GM12878 (cell line): ENCODE measurements at regions of chr18 and their contacts with region 1.

Region 1: DNA sequence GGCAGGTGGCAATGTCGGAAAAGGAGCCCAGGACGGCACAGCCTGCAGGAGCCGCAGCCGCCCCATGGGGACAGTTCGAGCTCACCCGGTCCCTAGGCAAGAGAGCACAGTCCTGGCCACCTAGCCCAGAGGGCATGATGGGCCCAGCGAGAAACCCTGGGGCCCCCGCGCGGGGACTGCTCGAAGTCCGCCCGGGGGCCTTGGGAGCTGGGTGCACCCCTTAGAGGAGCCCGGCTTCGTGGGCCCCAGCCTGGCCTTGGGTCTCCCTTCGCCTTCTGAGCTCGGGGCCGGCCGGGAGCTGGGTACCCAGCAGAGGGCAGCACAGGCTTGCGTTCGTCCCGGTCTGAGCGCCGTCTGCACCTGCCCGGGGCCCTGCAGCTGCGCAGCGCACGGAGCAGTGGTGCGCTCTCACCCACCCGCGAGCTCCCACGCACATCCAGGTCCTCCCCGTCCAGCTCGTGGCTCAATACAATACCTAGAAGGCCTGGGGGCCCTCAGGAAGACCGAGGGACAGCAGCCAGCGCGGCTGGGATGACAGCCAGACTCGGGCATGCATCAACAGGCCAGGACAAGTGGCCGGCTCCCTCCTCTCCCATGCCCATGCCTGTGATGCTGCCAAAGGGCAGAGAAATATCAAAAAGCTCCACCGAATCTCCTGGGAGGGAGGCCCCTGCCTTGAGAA is 96.2 kb upstream of the ZNF532 start:
- DNase-seq: no peak
- ATAC-seq: peak; percentile 98
- H3K4me3 ChIP-seq: no peak overlapping the region
- H3K27ac ChIP-seq: no peak overlapping the region
- H3K4me1 ChIP-seq: peaks cover 6% of the 10 kb centered on the region; the same call in 1 of the 2 replicates
- H3K27me3 ChIP-seq: no peaks in the 10 kb centered on the region; a peak in 2 of 4 replicates
- CTCF ChIP-seq: peak; percentile 80 to 93 (median 90)
- EP300 ChIP-seq: no peak
- POLR2A ChIP-seq: no peak
- RAD21 ChIP-seq: peak; percentile 81

Region 2: GRCh38 chr18:57768537-57769326 is 999.7 kb before region 1 on chr18:
- CTCF ChIA-PET with region 1: no interaction called
- POLR2A ChIA-PET with region 1: no interaction called
- RAD21 ChIA-PET with region 1: no interaction called
- SMC1A ChIA-PET with region 1: no interaction called
- in situ Hi-C with region 1: no loop called
- intact Hi-C with region 1: no loop called
- DNase-seq: no peak
- ATAC-seq: no peak
- H3K4me3 ChIP-seq: no peak overlapping the region
- H3K27ac ChIP-seq: no peak overlapping the region
- H3K4me1 ChIP-seq: no peaks in the 10 kb centered on the region
- H3K27me3 ChIP-seq: no peaks in the 10 kb centered on the region
- CTCF ChIP-seq: no peak
- EP300 ChIP-seq: no peak
- POLR2A ChIP-seq: no peak
- RAD21 ChIP-seq: no peak

Region 3: DNA sequence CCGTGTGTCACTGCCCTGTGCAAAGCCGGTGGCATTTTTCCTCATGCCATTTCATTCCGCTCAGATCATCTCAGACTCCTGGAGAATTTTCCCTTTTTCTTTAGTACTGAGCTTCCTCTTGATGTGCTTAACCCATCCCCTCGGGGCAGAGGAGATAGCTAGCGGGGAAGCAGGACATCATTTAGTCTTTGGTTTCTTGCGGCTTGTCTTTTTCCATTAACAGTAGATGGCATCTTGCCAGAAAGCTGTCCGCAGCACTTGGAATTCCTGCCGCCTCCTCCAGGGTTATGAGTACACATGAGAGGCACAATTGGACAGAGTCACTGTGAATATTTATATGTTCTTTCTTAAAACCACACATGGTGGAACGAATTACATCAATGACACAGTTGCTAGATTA is 366.2 kb before region 1 on chr18:
- CTCF ChIA-PET with region 1: interaction called, 32 read pairs
- POLR2A ChIA-PET with region 1: no interaction called
- RAD21 ChIA-PET with region 1: interaction called, 13 read pairs
- SMC1A ChIA-PET with region 1: interaction called, 11 read pairs
- in situ Hi-C with region 1: no loop called
- intact Hi-C with region 1: loop called (anchors 1 kb)
- DNase-seq: no peak
- ATAC-seq: no peak
- H3K4me3 ChIP-seq: no peak overlapping the region
- H3K27ac ChIP-seq: no peak overlapping the region
- H3K4me1 ChIP-seq: peaks cover 11% of the 10 kb centered on the region; the same call in 1 of the 2 replicates
- H3K27me3 ChIP-seq: no peaks in the 10 kb centered on the region
- CTCF ChIP-seq: no peak
- EP300 ChIP-seq: no peak
- POLR2A ChIP-seq: no peak
- RAD21 ChIP-seq: no peak

Region 4: DNA sequence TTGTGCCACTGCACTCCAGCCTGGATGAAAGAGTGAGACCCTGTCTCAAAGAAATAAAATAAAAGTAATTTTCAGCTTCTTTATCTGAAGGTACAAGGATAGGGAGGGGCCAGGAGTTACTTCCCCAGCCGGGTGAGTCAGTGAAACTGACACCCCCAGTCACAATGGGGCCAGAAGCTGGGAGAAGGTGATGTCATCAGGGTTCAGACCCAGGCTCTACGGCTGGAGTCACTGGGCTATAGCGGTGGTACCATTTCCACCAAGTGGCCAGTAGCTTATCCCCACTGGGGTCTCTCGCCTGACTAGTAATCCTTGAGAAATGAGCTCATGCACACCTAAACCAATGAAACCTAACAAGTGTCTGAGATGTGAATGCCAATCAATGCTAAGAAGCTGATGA is 247.5 kb before region 1 on chr18:
- CTCF ChIA-PET with region 1: interaction called, 743 read pairs
- POLR2A ChIA-PET with region 1: interaction called, 8 read pairs
- RAD21 ChIA-PET with region 1: interaction called, 522 read pairs
- SMC1A ChIA-PET with region 1: interaction called, 629 read pairs
- in situ Hi-C with region 1: no loop called
- intact Hi-C with region 1: no loop called
- DNase-seq: no peak
- ATAC-seq: peak; percentile 73
- H3K4me3 ChIP-seq: no peak overlapping the region
- H3K27ac ChIP-seq: no peak overlapping the region
- H3K4me1 ChIP-seq: peaks cover 16% of the 10 kb centered on the region
- H3K27me3 ChIP-seq: no peaks in the 10 kb centered on the region
- CTCF ChIP-seq: no peak
- EP300 ChIP-seq: no peak
- POLR2A ChIP-seq: no peak
- RAD21 ChIP-seq: no peak

Region 5: DNA sequence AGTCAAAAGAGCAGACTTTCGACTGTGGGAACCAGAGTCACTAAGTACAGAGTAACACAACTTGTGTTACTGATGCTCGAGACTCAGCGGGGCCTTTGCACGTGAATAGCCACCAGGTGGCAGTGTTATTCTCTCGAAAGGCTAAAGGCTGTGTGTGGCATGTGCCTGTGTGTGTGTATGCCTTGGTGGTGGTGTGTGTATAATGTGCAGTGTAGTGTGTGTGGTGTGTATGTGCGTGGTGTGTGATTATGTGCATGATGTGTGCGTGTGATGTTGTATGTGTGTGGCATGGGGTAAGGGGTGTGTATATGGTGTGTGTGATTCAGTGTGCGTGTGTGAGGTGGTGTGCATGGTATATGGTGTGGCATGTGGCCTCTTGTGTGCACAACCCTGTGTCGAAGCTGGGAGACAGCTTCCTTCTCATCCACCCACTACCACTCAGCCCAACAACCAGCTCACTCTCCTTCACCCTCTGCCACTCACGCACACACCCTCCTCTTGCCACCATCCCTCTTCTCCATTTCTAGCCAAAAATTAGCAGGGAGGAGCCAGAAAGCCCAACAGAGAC is 13.3 kb after region 1 on chr18:
- CTCF ChIA-PET with region 1: interaction called, 68 read pairs
- POLR2A ChIA-PET with region 1: no interaction called
- RAD21 ChIA-PET with region 1: interaction called, 18 read pairs
- SMC1A ChIA-PET with region 1: interaction called, 12 read pairs
- in situ Hi-C with region 1: no loop called
- intact Hi-C with region 1: no loop called
- DNase-seq: peak; percentile 57
- ATAC-seq: peak; percentile 99
- H3K4me3 ChIP-seq: no peak overlapping the region
- H3K27ac ChIP-seq: no peak overlapping the region
- H3K4me1 ChIP-seq: no peaks in the 10 kb centered on the region
- H3K27me3 ChIP-seq: no peaks in the 10 kb centered on the region
- CTCF ChIP-seq: peak; percentile 80 to 91 (median 83)
- EP300 ChIP-seq: no peak
- POLR2A ChIP-seq: no peak
- RAD21 ChIP-seq: peak; percentile 93

Region 6: GRCh38 chr18:58863539-58864145 is 95.2 kb after region 1 on chr18:
- CTCF ChIA-PET with region 1: no interaction called
- POLR2A ChIA-PET with region 1: no interaction called
- RAD21 ChIA-PET with region 1: no interaction called
- SMC1A ChIA-PET with region 1: no interaction called
- in situ Hi-C with region 1: no loop called
- intact Hi-C with region 1: no loop called
- DNase-seq: no peak
- ATAC-seq: peak; percentile 66
- H3K4me3 ChIP-seq: peak overlapping the region; percentile 68; the same call in 1 of the 2 replicates
- H3K27ac ChIP-seq: no peak overlapping the region
- H3K4me1 ChIP-seq: no peaks in the 10 kb centered on the region
- H3K27me3 ChIP-seq: peaks cover 0 to 2% of the 10 kb centered on the region in 2 experiments
- CTCF ChIP-seq: no peak
- EP300 ChIP-seq: no peak
- POLR2A ChIP-seq: 0 out of 2 replicates have a peak, but pooled peaks have one; percentile 39
- RAD21 ChIP-seq: no peak

Region 7: GRCh38 chr18:59075923-59076322 is 307.5 kb after region 1 on chr18:
- CTCF ChIA-PET with region 1: interaction called, 265 read pairs
- POLR2A ChIA-PET with region 1: no interaction called
- RAD21 ChIA-PET with region 1: interaction called, 82 read pairs
- SMC1A ChIA-PET with region 1: interaction called, 71 read pairs
- in situ Hi-C with region 1: no loop called
- intact Hi-C with region 1: no loop called
- DNase-seq: no peak
- ATAC-seq: no peak
- H3K4me3 ChIP-seq: no peak overlapping the region
- H3K27ac ChIP-seq: no peak overlapping the region
- H3K4me1 ChIP-seq: peaks cover 7% of the 10 kb centered on the region
- H3K27me3 ChIP-seq: 0 out of 4 replicates have a peak, but pooled peaks cover 0 to 3% of the 10 kb centered on the region in 2 experiments
- CTCF ChIP-seq: no peak
- EP300 ChIP-seq: no peak
- POLR2A ChIP-seq: no peak
- RAD21 ChIP-seq: no peak